Right ventricle myocardium superior (tissue), 1 donor: ENCODE measurements at regions of chr7 and their contacts with region 1.

Region 1: GRCh38 chr7:150356265-150356897 is 12.2 kb upstream of the REPIN1 start:
- DNase-seq: no peak
- ATAC-seq: no peak

Region 2: GRCh38 chr7:150420987-150421674 is 64.8 kb after region 1 on chr7:
- intact Hi-C with region 1: loop called (anchors 5 kb)
- DNase-seq: peak; percentile 86
- ATAC-seq: peak; percentile 98